ENCODE measurements at regions of chr11 and their contacts with region 1.

Region 1: DNA sequence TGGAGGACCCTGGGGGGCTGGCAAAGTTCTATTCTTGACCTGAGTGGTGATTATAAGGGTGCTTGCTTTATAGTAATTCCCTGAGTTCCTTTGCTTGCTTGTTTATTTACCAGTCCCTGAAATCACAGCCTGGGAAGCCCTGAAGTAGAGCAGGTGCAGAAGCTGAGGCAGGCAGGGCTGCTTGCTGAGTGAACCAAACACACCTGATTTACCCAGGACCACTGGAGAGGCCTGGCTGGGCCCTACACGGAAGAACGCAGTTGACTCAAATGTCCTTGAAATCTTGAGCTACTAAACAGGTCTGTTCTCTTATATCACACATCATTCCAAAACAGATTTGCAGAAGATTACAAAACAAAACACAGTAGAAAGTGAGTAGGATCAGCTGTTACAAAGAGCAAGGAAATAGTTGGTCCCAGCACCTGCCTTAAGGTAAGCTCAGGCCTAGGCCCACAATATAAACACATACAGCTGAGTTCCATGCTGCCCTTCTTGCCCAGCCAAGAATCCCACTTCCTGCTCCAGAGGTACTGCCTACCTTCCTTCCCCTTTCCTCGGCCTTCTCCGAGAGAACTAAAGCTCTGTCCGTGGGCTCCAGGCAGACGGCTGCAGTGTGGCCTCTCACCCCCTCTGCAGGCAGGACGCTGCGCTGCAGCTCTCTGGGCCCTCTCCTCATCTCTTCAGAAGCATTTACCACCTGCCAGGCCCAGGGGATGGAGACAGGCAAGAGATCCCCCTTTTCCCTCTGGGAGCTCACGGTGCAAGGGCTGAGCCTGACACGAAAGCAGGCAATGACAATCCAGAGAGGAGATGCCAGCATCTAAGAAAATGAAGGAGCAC is 46.1 kb upstream of the SCUBE2 start:
- DNase-seq: peak; percentile 75
- H3K4me3 ChIP-seq: no peak overlapping the region
- H3K27ac ChIP-seq: peak overlapping the region; percentile 41 to 65
- H3K4me1 ChIP-seq: peaks cover 32% of the 10 kb centered on the region
- H3K27me3 ChIP-seq: no peaks in the 10 kb centered on the region
- CTCF ChIP-seq: peak; percentile 84 to 96 (median 90)
- POLR2A ChIP-seq: no peak

Region 2: DNA sequence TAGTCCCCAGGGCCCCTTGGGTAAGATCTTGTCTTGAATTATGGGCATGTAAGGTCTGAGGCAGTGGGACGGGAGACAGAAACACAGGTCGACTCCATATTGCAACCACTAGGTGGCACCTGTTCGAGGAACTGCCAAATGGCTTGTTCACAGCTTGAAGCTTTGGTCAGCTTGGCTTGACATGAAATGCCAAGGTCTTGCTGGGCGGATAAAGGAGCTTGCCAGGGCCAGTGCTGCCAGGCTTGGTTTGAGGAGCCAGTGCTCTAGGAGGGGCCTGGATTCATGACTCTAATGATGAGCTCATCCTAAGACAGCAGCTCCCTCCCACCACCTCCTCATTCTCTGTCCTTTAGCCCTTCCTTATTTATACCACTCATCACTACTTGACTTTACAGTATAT is 121.8 kb before region 1 on chr11:
- intact Hi-C with region 1: loop called (anchors 2 kb)
- DNase-seq: peak; percentile 75
- H3K4me3 ChIP-seq: no peak overlapping the region
- H3K27ac ChIP-seq: no peak overlapping the region
- H3K4me1 ChIP-seq: no peaks in the 10 kb centered on the region
- H3K27me3 ChIP-seq: peaks cover 2% of the 10 kb centered on the region
- CTCF ChIP-seq: peak; percentile 51 to 78 (median 72)
- POLR2A ChIP-seq: no peak

Region 3: DNA sequence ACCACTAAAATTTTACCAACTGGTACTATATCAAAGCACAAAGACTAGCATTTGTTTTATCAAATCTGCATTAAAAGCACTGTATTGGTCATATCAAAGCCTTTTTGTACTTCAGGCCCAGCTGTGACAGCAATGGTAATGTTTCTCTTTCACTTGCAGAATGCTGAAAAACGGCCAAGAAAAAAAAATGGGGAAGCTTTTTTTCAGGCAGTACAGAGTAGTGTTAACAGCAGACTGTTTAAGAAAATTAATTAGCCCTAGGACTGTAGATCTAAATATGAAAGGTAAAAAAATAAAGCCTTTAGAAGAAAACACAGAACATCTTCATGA is 94.3 kb after region 1 on chr11:
- intact Hi-C with region 1: no loop called
- DNase-seq: no peak
- H3K4me3 ChIP-seq: peak overlapping the region in 1 of 2 donors; percentile 12
- H3K27ac ChIP-seq: peak overlapping the region; percentile 15 to 50
- H3K4me1 ChIP-seq: no peaks in the 10 kb centered on the region
- H3K27me3 ChIP-seq: no peaks in the 10 kb centered on the region
- CTCF ChIP-seq: no peak
- POLR2A ChIP-seq: no peak

Measured in prostate gland (tissue), 2 donors.